Psoas muscle (tissue), 8 donors: ENCODE measurements at regions of chr1 and their contacts with region 1.

Region 1: GRCh38 chr1:65332821-65333220 is 23.5 kb downstream of the DNAJC6 start:
- DNase-seq: no peak
- ATAC-seq: no peak
- H3K4me3 ChIP-seq: no peak overlapping the region
- H3K27ac ChIP-seq: no peak overlapping the region
- H3K4me1 ChIP-seq: no peaks in the 10 kb centered on the region
- H3K27me3 ChIP-seq: no peaks in the 10 kb centered on the region
- CTCF ChIP-seq: no peak

Region 2: DNA sequence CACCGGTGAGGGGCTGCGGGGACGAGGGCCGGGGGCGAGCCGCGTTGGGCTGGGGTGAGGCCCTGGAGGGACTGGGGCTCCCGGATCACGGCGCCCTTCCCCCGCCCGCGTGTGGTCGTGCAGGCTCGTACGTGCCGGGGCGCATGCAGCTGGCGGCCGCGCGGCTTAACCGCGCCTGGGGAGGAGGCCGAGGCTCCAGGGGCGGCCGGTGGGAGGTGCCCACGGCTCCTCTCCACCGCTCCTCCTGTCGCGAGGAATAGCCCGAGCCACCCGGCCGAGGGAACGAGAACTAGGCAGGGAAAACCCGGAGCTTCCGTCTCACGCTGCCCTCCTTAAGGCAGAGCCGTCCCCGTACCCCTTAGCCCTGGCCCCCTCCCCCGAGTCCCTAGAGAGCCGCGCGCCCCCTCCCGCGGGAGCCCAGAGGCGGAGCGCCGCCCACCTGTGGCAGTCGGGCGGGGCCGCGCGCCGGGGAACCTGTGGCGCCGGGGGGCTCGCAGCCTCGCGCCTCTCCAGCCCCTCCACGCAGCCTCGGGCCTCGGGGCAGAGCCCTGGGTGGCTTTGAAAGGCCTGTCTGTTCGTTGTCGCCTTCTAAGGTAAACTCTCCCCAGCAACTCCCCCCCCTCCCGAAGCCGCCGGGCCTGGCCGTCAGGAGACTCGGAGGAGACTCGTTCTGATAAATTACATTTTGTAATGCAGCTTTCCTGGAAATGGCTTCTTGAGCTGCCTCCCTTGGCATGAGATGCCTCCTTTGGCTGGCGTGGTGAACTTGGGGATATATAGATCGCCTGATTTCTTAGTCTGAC is 184.1 kb before region 1 on chr1:
- intact Hi-C with region 1: no loop called
- DNase-seq: peak; percentile 42 to 58
- ATAC-seq: peak; percentile 53 to 70 (median 62)
- H3K4me3 ChIP-seq: peak overlapping the region; percentile 83
- H3K27ac ChIP-seq: peak overlapping the region; percentile 50
- H3K4me1 ChIP-seq: peaks cover 4% of the 10 kb centered on the region
- H3K27me3 ChIP-seq: peaks cover 0 to 13% (median 3%) of the 10 kb centered on the region in 3 donors
- CTCF ChIP-seq: no peak

Region 3: DNA sequence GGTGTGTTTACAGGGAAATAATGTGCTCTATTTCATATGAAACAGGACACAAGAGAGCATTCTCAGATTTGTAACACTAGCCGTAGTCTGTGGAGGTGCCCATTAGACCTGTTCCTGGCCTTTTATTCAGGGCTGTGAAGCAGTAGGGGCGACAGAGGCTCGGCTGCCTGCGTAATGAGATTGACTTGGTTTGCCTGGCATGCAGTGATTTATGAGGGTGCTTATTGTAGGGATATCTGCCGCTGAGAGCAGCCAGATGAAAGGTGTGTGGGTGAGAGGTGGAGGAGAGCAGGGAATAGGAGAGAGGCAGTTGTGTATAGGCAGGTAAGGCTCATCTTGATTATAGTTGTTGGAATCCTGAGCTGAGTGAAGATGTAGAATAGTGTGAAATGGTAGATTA is 27.8 kb after region 1 on chr1:
- intact Hi-C with region 1: loop called in 1 of 2 experiments (anchors 1 kb)
- DNase-seq: no peak
- ATAC-seq: no peak
- H3K4me3 ChIP-seq: no peak overlapping the region
- H3K27ac ChIP-seq: no peak overlapping the region
- H3K4me1 ChIP-seq: no peaks in the 10 kb centered on the region
- H3K27me3 ChIP-seq: peaks cover 0 to 7% (median 0%) of the 10 kb centered on the region in 3 donors
- CTCF ChIP-seq: no peak

Region 4: GRCh38 chr1:65435987-65436386 is 103.2 kb after region 1 on chr1:
- intact Hi-C with region 1: no loop called
- DNase-seq: no peak
- ATAC-seq: no peak
- H3K4me3 ChIP-seq: no peak overlapping the region
- H3K27ac ChIP-seq: no peak overlapping the region
- H3K4me1 ChIP-seq: peaks cover 7% of the 10 kb centered on the region
- H3K27me3 ChIP-seq: no peaks in the 10 kb centered on the region
- CTCF ChIP-seq: no peak